ENCODE measurements at regions of chr14 and their contacts with region 1.

Region 1: DNA sequence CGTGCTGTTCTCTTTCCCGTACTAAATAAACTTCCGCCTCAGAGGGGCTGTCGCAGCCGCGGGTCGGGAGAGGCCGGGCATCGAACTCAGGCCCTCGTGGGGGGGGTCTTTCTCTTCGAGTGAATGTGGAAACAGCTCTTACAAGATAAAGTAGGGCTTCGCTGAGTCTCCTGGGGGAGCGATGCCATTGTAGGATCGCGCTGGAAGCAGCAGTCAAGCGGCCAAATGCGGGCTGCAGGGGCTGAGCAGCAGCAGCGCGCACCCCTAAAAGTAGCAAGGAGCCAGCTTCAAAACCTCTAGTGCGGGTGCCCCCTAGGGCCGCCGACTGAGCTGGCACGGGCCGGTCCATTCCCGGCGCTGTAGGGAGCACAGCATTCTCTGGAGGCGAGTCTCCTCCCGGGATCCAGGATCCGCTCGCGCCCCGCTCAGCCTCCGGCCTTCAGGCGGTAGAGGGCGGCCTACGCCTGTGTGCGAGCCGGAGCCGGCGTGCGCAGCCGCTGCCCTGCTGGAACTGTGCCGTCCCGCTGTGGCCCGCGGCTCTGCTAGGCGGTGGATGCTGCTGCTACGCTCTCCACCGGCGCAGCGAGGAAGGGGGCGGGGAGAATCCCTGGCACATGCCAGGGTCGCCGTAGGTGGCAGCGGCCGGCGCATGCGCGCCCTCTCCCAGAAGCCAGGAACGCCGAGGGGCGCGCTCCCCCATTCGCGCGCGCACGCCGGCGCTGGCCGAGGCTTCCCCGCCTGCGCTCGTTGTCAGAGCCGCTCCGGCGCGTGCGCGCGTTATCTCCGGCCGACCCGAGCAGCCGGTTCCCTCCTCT is at the start of gene FUT8:
- DNase-seq: peak; percentile 96 to 97
- ATAC-seq: peak; percentile 83
- total RNA-seq, gene FUT8: 22.3 to 27.8 TPM

Region 2: GRCh38 chr14:65565948-65566347 is 153.7 kb after region 1 on chr14:
- intact Hi-C with region 1: no loop called
- DNase-seq: no peak
- ATAC-seq: no peak

Region 3: DNA sequence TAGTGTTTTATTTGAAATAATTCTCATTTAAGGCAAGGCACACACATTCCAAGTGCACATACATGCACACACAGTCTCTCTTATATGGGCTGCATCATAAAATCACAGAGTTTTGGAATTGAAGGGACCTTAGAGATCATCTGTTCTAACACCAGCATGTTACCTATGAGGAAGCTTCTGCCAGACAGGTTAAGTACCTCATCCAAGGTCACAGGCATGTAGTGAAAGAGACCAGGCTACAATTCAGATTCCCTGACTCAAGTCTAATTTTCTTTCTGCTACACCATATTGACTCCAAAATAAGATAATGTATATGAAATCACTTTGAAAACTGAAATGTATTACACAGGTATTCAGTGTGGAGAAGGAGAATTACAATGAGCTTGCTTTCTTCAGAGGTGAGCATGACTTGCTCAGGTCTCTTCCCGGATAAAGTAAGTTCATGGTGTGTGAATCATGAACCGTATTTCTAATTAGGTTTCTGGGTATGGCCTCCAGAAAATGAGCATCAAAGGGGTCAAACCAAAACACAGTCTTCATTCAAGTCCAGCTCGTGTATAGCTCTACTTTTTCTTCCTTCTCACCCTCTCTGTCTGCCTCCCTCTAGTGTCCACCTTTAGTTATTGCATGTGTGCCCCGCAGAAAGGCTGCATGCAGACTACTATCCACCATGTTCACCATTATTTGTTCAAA is 412.2 kb after region 1 on chr14:
- intact Hi-C with region 1: loop called (anchors 5 to 10 kb)
- DNase-seq: peak in 1 of 2 donors; percentile 44
- ATAC-seq: peak; percentile 93

Measured in left colon (tissue), 2 donors.